IMR-90 (cell line): ENCODE measurements at regions of chr6 and their contacts with region 1.

Region 1: GRCh38 chr6:30583921-30584320 is 12.7 kb downstream of the ABCF1 start:
- DNase-seq: no peak
- ATAC-seq: no peak
- H3K4me3 ChIP-seq: no peak overlapping the region
- H3K27ac ChIP-seq: no peak overlapping the region
- H3K4me1 ChIP-seq: no peaks in the 10 kb centered on the region
- H3K27me3 ChIP-seq: no peaks in the 10 kb centered on the region
- CTCF ChIP-seq: no peak
- POLR2A ChIP-seq: no peak
- RAD21 ChIP-seq: no peak

Region 2: DNA sequence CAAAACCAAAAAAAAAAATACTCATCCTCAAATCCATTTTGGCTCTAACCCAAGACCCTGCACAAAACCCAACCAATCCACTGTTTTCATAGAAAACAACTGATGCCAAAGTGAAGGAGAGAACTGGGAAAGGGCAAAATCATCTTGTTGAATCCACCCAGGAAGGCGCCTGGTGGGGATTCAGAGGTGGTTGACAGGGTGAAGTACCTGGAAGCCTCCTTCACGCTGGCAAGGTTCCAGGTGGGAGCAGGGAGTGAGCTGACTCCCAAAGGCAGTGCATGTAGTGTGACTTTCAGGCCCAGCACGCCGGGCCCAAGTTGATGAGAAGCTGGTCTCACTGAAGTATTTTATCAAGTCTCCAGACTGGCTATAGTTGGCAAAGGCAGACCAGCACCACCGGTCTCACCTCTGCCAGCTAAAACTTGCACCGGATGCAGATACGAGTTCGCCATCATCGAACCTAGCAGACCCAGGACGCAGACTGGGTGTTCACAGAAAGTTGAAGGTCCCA is 16.6 kb after region 1 on chr6:
- CTCF ChIA-PET with region 1: interaction called, 6 read pairs
- POLR2A ChIA-PET with region 1: interaction called, 11 read pairs
- dilution Hi-C with region 1: no loop called
- in situ Hi-C with region 1: no loop called
- intact Hi-C with region 1: no loop called
- DNase-seq: no peak
- ATAC-seq: no peak
- H3K4me3 ChIP-seq: no peak overlapping the region
- H3K27ac ChIP-seq: no peak overlapping the region
- H3K4me1 ChIP-seq: no peaks in the 10 kb centered on the region
- H3K27me3 ChIP-seq: no peaks in the 10 kb centered on the region
- CTCF ChIP-seq: no peak
- POLR2A ChIP-seq: no peak
- RAD21 ChIP-seq: no peak

Region 3: DNA sequence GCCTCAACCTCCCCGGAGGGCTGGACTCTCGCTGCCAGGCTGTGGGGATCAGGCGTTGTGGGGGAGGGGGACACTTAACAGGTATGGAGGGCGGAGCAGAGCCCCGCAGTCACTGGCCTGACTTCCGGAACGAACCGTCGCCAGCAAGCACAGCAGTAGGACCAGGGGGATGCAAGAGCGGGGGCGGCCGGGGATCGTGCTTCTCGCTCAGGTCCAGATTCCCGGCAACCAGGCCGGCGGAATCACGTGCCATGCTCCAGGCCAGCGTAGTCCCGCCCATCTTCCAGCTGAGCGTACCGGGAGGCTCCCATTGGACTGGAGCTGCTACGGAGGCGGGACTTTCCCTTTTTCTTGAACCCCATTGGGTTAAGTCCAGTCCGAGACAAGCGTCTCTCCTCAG is 596.6 kb after region 1 on chr6:
- CTCF ChIA-PET with region 1: no interaction called
- POLR2A ChIA-PET with region 1: no interaction called
- dilution Hi-C with region 1: no loop called
- in situ Hi-C with region 1: no loop called
- intact Hi-C with region 1: no loop called
- DNase-seq: no peak
- ATAC-seq: 0 out of 2 replicates have a peak, but pooled peaks have one; percentile 36
- H3K4me3 ChIP-seq: no peak overlapping the region
- H3K27ac ChIP-seq: no peak overlapping the region
- H3K4me1 ChIP-seq: peaks cover 6% of the 10 kb centered on the region
- H3K27me3 ChIP-seq: no peaks in the 10 kb centered on the region
- CTCF ChIP-seq: no peak
- POLR2A ChIP-seq: no peak
- RAD21 ChIP-seq: no peak